ENCODE measurements at regions of chrX and their contacts with region 1.

Region 1: DNA sequence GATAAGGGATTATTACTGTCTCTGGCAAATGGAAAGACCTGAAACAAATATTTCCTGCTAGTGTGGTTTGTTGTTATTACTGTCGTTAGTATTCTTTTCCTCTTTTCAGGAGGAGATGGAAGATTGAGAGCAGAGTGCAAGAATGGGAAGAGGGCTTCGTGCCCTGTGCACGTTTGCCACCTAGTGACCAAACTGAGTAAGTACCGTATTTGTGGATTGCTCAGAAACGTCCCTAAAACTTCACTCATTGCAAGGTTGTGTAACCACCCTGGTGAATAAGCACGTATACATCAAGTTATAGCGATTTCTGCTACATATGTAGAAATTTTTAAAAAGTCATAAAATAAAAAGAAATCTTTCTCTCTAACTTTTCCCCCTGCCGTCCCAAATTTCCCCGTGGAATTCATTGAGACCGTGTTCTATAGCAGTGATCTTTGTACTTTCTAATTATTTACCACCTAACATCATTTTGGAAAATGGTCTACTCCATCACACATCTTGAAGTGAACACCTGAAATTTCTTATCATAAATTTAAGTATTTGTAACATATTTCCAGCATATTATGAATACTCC is 24.3 kb downstream of the LINC00632 start:
- DNase-seq: peak; percentile 11
- H3K4me3 ChIP-seq: no peak overlapping the region
- H3K27ac ChIP-seq: no peak overlapping the region
- H3K4me1 ChIP-seq: no peaks in the 10 kb centered on the region
- H3K27me3 ChIP-seq: no peaks in the 10 kb centered on the region
- CTCF ChIP-seq: peak; percentile 37 to 59
- POLR2A ChIP-seq: no peak

Region 2: GRCh38 chrX:140572724-140573123 is 161.1 kb before region 1 on chrX:
- CTCF ChIA-PET with region 1: no interaction called
- POLR2A ChIA-PET with region 1: no interaction called
- dilution Hi-C with region 1: no loop called
- intact Hi-C with region 1: loop called (anchors 5 kb)
- DNase-seq: no peak
- H3K4me3 ChIP-seq: no peak overlapping the region
- H3K27ac ChIP-seq: no peak overlapping the region
- H3K4me1 ChIP-seq: no peaks in the 10 kb centered on the region
- H3K27me3 ChIP-seq: no peaks in the 10 kb centered on the region
- CTCF ChIP-seq: peak; percentile 8 to 16
- POLR2A ChIP-seq: no peak

Region 3: DNA sequence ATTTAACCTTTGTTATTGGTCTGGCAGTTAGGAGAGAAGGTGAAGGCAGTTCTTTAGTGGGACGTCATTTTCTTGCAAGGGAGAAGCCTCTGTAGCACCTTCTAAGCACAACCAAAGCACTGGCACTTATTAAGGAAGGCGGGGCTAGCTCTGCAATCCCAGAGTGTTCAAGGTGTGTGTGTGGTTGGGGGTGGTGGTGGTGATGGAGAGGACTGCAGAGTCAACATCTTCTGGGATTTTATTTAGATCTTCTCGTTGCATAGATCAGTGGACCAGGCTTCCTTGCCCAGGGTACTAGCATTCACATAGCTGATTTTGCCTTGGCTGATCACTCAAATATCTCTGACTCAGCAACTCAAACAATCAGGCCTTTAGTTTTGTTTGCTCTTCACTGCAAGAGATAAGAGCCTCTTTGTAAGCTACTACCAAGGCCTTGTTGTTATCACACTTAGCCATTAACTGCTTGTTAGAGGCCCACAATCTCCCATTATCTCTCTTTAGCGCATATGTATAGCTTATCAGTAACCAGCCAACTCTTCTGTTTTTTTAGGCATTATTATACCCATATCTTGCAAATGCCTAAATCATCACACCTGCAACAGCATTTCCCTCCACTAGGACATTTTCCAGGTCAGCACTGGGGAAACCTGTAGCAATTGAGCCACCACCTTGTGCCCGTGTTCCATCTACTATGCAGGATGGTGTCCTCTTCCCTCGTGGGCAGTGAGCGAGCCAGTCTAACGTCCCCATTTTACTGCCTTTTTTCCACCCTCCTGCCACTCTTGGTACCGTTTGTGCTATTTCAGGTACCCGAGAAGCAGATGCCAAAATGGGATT is 60.7 kb before region 1 on chrX:
- CTCF ChIA-PET with region 1: no interaction called
- POLR2A ChIA-PET with region 1: no interaction called
- dilution Hi-C with region 1: no loop called
- intact Hi-C with region 1: no loop called
- DNase-seq: no peak
- H3K4me3 ChIP-seq: no peak overlapping the region
- H3K27ac ChIP-seq: no peak overlapping the region
- H3K4me1 ChIP-seq: no peaks in the 10 kb centered on the region
- H3K27me3 ChIP-seq: no peaks in the 10 kb centered on the region
- CTCF ChIP-seq: no peak
- POLR2A ChIP-seq: no peak

Region 4: DNA sequence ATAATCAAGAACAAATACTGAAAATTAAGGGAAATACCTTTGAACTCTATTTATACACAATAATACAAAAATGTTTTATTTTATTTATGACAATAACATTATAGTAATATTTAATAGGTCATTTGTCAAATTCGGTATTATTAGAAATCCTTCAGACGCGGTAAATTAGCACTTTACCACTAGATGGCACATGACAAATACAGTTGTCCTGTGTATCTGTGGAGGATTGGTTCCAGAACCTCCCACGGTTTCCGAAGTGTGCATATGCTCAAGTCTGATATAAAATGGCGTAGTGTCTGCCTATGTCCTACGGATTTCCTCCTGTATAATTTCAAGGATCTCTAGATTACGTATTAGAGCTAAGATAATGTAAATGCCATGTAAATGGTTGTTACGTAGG is 32.4 kb before region 1 on chrX:
- CTCF ChIA-PET with region 1: no interaction called
- POLR2A ChIA-PET with region 1: no interaction called
- dilution Hi-C with region 1: no loop called
- intact Hi-C with region 1: loop called (anchors 1 kb)
- DNase-seq: no peak
- H3K4me3 ChIP-seq: no peak overlapping the region
- H3K27ac ChIP-seq: no peak overlapping the region
- H3K4me1 ChIP-seq: no peaks in the 10 kb centered on the region
- H3K27me3 ChIP-seq: no peaks in the 10 kb centered on the region
- CTCF ChIP-seq: no peak
- POLR2A ChIP-seq: no peak

Measured in endothelial cell of umbilical vein (primary cell).